Activated CD8-positive, alpha-beta memory T cell treated with anti-CD3 and anti-CD28 coated beads, Interleukin-2, amount 10 ng/mL, durations not matched to agents 7 days and 5 days (primary cell): ENCODE measurements at regions of chr17 and their contacts with region 1.

Region 1: DNA sequence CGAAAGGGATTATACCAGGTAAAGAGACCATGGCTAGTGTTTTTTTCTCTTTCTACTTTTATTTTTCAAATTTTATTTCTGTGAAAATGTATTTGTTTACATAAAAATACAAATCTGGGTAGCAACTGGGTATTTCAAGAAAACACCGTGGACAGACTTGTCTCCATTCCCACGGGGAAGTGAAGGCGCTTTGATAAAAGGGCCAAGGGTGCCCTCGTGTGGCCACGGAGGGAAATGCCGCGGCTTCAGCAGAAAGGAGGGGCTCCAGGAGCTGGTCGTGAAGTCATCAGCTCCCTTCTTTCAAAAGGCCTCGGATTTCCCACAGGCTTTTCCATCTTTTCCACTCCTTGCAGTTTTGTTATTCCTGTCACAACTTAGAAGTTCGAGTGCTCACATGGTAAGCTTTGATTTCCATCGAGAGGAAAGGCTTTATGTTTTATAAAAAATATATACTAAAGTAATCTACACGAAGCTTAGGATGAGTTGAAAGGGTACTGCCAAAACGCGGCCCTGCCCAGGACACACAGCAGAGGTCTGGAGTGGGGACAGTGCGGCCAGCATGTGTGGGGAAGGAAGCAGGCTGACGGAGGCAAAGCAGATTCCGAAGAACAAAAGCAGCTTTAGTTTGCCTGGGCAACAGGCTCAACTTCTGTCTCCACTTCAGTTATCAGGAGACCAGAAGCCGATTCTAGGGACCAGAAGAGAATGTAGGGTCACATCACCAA is 15.3 kb upstream of the MNT start:
- DNase-seq: peak; percentile 90
- ATAC-seq: peak; percentile 70
- H3K4me3 Mint-ChIP-seq: no peak overlapping the region
- H3K27ac Mint-ChIP-seq: no peak overlapping the region
- H3K4me1 Mint-ChIP-seq: peaks cover 5% of the 10 kb centered on the region
- H3K27me3 Mint-ChIP-seq: no peaks in the 10 kb centered on the region

Region 2: GRCh38 chr17:2137342-2138098 is 278.7 kb before region 1 on chr17:
- CTCF ChIA-PET with region 1: no interaction called
- DNase-seq: no peak
- ATAC-seq: no peak
- H3K4me3 Mint-ChIP-seq: no peak overlapping the region
- H3K27ac Mint-ChIP-seq: peak overlapping the region; percentile 77
- H3K4me1 Mint-ChIP-seq: peaks cover 28% of the 10 kb centered on the region
- H3K27me3 Mint-ChIP-seq: no peaks in the 10 kb centered on the region

Region 3: GRCh38 chr17:2354311-2354710 is 61.9 kb before region 1 on chr17:
- CTCF ChIA-PET with region 1: interaction called, 21 read pairs
- DNase-seq: no peak
- ATAC-seq: no peak
- H3K4me3 Mint-ChIP-seq: peak overlapping the region; percentile 14
- H3K27ac Mint-ChIP-seq: peak overlapping the region; percentile 85
- H3K4me1 Mint-ChIP-seq: peaks cover 15% of the 10 kb centered on the region
- H3K27me3 Mint-ChIP-seq: no peaks in the 10 kb centered on the region

Region 4: DNA sequence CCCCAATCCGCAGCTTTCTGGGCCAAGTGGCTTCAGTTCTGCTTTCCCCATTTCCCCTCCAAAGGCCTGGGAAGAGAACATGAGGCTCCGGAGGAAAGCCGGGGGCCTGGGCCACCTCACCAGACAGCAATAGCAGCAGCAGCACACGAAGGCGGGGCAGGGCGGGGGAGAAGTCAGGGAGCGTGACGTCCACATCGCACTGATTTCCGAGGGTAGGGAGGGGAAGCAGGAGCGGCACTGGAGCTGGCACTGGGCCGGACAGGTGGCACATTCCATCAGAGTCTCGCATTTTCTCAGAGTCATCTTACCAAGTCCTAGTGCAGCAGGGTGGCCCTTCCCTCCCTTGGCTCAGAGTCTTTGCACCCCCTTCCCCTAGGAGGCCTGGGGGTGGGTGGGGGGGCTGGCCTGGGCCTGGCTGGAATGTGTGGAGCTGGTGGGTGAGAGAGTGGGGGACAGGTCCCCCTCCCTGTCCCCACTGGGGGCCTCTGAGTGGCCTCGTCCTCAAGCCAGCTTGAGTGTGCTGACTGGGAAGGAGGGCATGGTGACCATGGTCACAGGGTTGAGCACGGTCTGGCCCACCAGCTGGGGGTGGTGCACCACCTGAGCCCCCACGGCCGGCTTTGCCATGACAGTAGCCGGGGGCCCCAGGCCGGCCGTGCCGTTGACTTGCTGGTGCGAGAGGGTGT is 29.6 kb before region 1 on chr17:
- CTCF ChIA-PET with region 1: interaction called, 323 read pairs
- DNase-seq: no peak
- ATAC-seq: no peak
- H3K4me3 Mint-ChIP-seq: no peak overlapping the region
- H3K27ac Mint-ChIP-seq: no peak overlapping the region
- H3K4me1 Mint-ChIP-seq: peaks cover 31% of the 10 kb centered on the region
- H3K27me3 Mint-ChIP-seq: no peaks in the 10 kb centered on the region

Region 5: DNA sequence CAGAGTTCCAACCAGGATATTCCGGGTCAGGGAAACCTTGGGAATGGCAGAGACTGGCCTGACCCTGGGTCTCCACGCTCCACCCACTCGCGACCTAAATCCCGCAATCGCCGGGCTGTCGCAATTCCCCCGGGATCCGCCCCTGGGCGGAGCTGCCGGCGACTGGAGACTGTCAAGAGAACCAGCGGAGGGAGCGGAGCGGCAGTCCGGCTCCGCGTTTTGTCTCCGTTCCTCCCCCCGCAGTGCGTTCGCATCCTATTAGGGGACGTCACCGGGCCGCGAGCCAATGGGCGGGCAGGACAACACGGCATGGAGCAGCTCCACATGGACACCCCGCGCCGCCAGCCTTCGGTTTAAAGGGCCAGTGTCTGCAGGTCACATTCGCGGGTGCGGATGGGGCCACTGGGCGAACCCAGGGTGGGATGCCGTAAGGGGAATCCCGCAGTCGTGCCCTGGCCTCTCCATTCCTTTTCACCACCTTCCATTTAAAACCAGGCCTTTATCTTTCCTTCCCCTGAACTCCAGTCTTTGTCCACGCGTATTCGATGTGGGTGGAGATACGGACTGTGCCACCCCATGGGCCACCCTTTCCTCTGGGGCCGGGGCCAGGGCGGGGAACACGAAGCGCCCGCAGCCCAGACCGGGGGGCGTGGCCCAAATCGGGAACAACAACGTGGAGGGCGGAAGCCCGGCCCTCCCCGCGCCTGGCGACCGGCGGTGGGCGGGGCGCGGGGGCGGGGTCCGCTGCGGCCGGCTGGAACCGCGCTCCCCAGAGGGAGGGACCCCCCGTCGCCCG is 14.5 kb before region 1 on chr17:
- CTCF ChIA-PET with region 1: interaction called, 70 read pairs
- DNase-seq: peak; percentile 100
- ATAC-seq: peak; percentile 61
- H3K4me3 Mint-ChIP-seq: peak overlapping the region; percentile 94
- H3K27ac Mint-ChIP-seq: peak overlapping the region; percentile 93
- H3K4me1 Mint-ChIP-seq: peaks cover 49% of the 10 kb centered on the region
- H3K27me3 Mint-ChIP-seq: no peaks in the 10 kb centered on the region

Region 6: GRCh38 chr17:2442166-2442565 is 26.0 kb after region 1 on chr17:
- CTCF ChIA-PET with region 1: interaction called, 11 read pairs
- DNase-seq: no peak
- ATAC-seq: no peak
- H3K4me3 Mint-ChIP-seq: no peak overlapping the region
- H3K27ac Mint-ChIP-seq: no peak overlapping the region
- H3K4me1 Mint-ChIP-seq: peaks cover 4% of the 10 kb centered on the region
- H3K27me3 Mint-ChIP-seq: no peaks in the 10 kb centered on the region

Region 7: GRCh38 chr17:2517539-2517938 is 101.4 kb after region 1 on chr17:
- CTCF ChIA-PET with region 1: no interaction called
- DNase-seq: no peak
- ATAC-seq: no peak
- H3K4me3 Mint-ChIP-seq: no peak overlapping the region
- H3K27ac Mint-ChIP-seq: no peak overlapping the region
- H3K4me1 Mint-ChIP-seq: peaks cover 3% of the 10 kb centered on the region
- H3K27me3 Mint-ChIP-seq: no peaks in the 10 kb centered on the region